ENCODE measurements at regions of chr10 and their contacts with region 1.

Region 1: GRCh38 chr10:12264204-12264940 is 68.4 kb downstream of the CDC123 start:
- DNase-seq: no peak
- ATAC-seq: peak; percentile 95
- H3K4me3 ChIP-seq: peak overlapping the region; percentile 32 to 57
- H3K27ac ChIP-seq: no peak overlapping the region
- H3K4me1 ChIP-seq: no peaks in the 10 kb centered on the region
- H3K27me3 ChIP-seq: no peaks in the 10 kb centered on the region
- CTCF ChIP-seq: peak; percentile 91

Region 2: DNA sequence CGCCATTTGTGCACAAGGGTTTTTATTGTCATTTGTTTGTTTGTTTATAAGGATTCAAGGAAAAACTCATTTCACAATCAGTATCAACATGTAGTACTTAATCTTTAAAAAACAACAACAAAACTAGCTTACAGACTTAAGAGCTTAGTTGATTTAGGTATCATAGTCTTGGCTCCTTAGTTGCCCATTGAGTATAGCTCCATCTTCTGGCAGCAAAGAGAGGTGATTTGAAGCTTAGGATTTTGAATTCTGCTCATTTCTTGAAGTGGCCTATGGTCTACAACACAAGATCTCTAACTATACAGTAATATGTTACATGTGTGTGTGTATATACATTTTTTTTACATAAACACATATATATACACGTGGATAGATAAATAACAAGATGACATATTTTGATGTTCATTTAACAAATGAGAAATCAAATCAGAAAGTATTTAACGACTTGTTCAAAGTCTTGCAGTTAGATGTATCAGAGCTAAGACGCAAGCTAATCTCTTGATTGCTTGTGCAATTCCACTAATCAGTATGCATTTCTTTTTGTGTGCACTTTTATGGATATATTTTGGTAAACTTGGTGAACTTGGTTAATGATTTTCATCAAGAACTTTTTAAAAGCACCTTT is 392.3 kb after region 1 on chr10:
- CTCF ChIA-PET with region 1: interaction called, 13 read pairs
- POLR2A ChIA-PET with region 1: no interaction called
- in situ Hi-C with region 1: no loop called
- intact Hi-C with region 1: loop called (anchors 5 kb)
- DNase-seq: peak; percentile 24
- ATAC-seq: no peak; the same call in 1 of the 2 replicates
- H3K4me3 ChIP-seq: no peak overlapping the region
- H3K27ac ChIP-seq: no peak overlapping the region
- H3K4me1 ChIP-seq: no peaks in the 10 kb centered on the region
- H3K27me3 ChIP-seq: no peaks in the 10 kb centered on the region
- CTCF ChIP-seq: peak; percentile 71; the same call in 1 of the 2 replicates

Measured in Panc1 (cell line).